K562 (cell line): ENCODE measurements at regions of chr1 and their contacts with region 1.

Region 1: GRCh38 chr1:32013386-32014198 is at the start of gene KHDRBS1:
- DNase-seq: peak; percentile 100
- ATAC-seq: peak; percentile 83
- H3K4me3 ChIP-seq: peak within 1 kb of the TSS; percentile 82
- H3K27ac ChIP-seq: peak within 1 kb of the TSS; percentile 95
- H3K4me1 ChIP-seq: peaks cover 24 to 42% of the 10 kb centered on the region in 2 experiments; a peak in 4 of 5 replicates
- H3K27me3 ChIP-seq: no peaks in the 10 kb centered on the region
- CTCF ChIP-seq: no peak
- EP300 ChIP-seq: no peak; the same call in 1 of the 2 replicates
- POLR2A ChIP-seq: peak; percentile 93
- RAD21 ChIP-seq: no peak; a peak in 1 of 4 replicates
- polyA plus RNA-seq, gene KHDRBS1: 48.4 to 53.2 TPM

Region 2: DNA sequence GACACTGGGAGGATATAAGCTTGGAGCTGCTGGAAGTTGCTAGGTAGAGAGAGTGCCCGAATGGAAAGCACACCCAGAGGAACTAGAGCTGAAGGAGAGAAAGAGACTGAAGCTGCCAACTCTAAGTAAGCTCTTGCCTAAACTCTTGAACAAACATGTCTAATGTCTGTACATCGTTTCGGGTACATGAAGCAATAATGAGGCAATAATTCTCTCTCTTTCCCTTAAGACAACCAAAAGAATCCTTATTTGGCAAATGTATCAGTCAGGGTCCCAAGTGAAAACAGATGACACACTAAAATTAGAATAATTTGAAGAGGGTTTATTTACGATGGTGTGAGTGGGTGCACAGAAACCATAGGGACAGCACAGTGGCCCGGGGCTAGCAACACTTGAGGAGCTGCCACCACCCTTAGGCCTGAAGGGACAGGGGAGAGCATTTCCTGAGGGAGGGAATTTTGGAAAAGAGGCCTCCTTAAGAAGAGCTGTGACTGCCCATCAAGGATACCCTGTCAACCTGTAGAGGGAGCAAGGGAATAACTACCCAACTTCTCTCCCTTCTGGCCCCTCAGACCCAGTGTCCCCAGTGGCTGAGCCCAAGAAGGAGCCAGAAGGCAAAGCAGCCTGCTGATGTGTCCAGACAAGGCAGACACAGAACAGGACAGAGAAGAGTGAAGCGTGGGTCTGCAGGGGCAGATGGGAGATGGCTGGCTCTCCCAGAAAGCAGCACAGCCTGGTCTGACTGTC is 36.0 kb before region 1 on chr1:
- CTCF ChIA-PET with region 1: no interaction called
- POLR2A ChIA-PET with region 1: no interaction called
- in situ Hi-C with region 1: no loop called
- intact Hi-C with region 1: loop called (anchors 5 kb)
- DNase-seq: peak; percentile 68 to 80 (median 76)
- ATAC-seq: peak; percentile 97
- H3K4me3 ChIP-seq: no peak overlapping the region
- H3K27ac ChIP-seq: no peak overlapping the region
- H3K4me1 ChIP-seq: peaks cover 0 to 5% of the 10 kb centered on the region in 2 experiments; a peak in 2 of 5 replicates
- H3K27me3 ChIP-seq: no peaks in the 10 kb centered on the region
- CTCF ChIP-seq: peak; percentile 84 to 97 (median 95)
- EP300 ChIP-seq: no peak
- POLR2A ChIP-seq: no peak
- RAD21 ChIP-seq: peak; percentile 59 to 84

Region 3: GRCh38 chr1:31995263-31995662 is 18.3 kb before region 1 on chr1:
- CTCF ChIA-PET with region 1: no interaction called
- POLR2A ChIA-PET with region 1: interaction called, 10 read pairs
- in situ Hi-C with region 1: no loop called
- intact Hi-C with region 1: no loop called
- DNase-seq: no peak
- ATAC-seq: no peak
- H3K4me3 ChIP-seq: no peak overlapping the region
- H3K27ac ChIP-seq: no peak overlapping the region
- H3K4me1 ChIP-seq: no peaks in the 10 kb centered on the region; a peak in 1 of 5 replicates
- H3K27me3 ChIP-seq: no peaks in the 10 kb centered on the region
- CTCF ChIP-seq: no peak
- EP300 ChIP-seq: no peak
- POLR2A ChIP-seq: no peak
- RAD21 ChIP-seq: no peak